ENCODE measurements at regions of chr1 and their contacts with region 1.

Region 1: DNA sequence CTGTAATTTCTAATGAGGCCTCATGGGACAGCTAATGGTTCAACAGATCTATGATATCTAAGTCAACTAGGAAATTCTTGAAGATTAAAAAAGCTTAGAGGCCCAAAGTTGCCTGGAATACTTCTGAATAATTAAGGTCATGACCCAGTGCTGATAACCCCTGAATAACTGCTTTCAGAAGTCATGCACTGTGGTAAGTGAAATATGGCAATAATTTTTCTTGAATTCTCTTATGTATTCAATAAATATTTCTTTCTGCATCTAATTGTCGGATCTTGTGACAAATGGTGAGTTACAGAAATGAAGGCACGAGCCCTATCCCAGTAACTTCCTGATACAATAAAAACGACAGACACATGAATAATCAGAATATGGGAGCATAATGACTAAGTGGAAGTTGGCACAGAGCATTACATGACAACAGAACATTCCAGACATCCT is 219.3 kb upstream of the GREM2 start:
- DNase-seq: no peak
- H3K4me3 ChIP-seq: no peak overlapping the region
- H3K27ac ChIP-seq: no peak overlapping the region
- H3K4me1 ChIP-seq: no peaks in the 10 kb centered on the region
- H3K27me3 ChIP-seq: no peaks in the 10 kb centered on the region
- CTCF ChIP-seq: no peak

Region 2: GRCh38 chr1:240739754-240740153 is 91.5 kb before region 1 on chr1:
- CTCF ChIA-PET with region 1: no interaction called
- dilution Hi-C with region 1: loop called (anchors 5 kb)
- in situ Hi-C with region 1: no loop called
- intact Hi-C with region 1: no loop called
- DNase-seq: no peak
- H3K4me3 ChIP-seq: no peak overlapping the region
- H3K27ac ChIP-seq: no peak overlapping the region
- H3K4me1 ChIP-seq: no peaks in the 10 kb centered on the region
- H3K27me3 ChIP-seq: no peaks in the 10 kb centered on the region
- CTCF ChIP-seq: no peak